Esophagus muscularis mucosa (tissue), 4 donors: ENCODE measurements at regions of chr14 and their contacts with region 1.

Region 1: DNA sequence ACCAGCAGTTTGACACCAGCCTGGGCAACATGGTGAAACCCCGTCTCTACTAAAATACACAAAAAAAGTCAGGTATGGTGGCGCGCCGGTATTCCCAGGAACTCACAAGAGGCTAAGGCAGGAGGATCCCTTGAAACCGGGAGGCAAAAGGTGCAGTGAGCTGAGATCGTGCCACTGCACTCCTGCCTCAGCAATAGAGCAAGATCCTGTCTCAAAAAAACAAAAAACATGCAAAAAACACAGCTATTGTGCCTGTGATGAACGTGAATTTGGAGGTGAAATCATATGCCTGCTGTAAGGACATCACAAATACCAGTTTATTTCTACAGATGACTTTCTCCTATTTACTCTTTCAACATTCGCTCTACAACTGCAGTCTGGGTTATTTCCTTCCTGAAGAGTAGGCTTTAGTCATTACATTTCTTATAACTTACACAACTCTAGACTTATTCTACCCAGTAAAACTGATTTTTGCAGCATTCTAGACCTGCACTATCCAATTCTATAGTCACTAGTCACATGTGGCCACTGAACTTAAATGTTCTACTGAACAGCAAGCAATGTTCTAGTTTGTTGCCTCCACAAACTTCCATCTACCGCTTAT is 48.3 kb downstream of the HNRNPC start:
- DNase-seq: no peak
- H3K4me3 ChIP-seq: no peak overlapping the region
- H3K27ac ChIP-seq: no peak overlapping the region
- H3K4me1 ChIP-seq: peaks cover 25 to 80% (median 64%) of the 10 kb centered on the region in 4 donors
- H3K27me3 ChIP-seq: no peaks in the 10 kb centered on the region
- CTCF ChIP-seq: no peak
- EP300 ChIP-seq: no peak
- POLR2A ChIP-seq: no peak

Region 2: DNA sequence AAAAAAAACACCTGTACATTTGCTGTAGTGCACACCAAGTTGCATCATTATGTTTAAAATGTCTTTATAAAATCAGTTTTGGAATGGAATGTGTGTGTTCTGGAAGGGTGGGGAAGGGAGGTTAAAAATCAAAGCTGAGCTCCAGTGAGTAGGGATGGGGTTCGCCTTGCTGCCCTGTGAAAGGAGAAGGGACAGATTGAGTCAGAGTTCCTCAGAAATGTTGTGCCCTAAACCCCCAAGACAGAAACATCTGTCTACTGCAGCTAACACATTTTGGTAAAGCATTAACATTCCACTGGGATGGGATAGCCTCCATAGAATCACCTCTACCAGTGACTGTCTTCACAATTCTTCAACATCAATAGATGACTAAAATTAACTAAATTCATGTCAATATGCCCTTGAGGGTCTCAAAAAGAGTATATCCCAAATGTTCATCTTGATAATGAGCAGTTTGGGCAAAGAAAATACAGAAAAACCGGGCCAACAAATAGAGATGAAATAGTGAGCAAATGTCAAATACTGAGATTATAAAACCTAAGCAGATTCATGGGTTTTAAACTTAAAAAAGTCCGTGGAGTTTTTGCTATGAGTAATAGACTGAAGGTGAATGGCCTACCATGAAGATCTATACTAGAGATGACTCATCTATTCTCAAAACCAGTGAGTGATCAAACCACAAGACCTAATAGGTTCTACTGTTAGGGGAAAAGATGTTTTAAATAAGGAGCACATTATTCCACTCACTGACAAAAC is 42.9 kb after region 1 on chr14:
- intact Hi-C with region 1: loop called (anchors 5 kb)
- DNase-seq: no peak
- H3K4me3 ChIP-seq: peak overlapping the region in 1 of 4 donors; percentile 1
- H3K27ac ChIP-seq: peak overlapping the region in 3 of 4 donors; percentile 17 to 58 (median 34)
- H3K4me1 ChIP-seq: peaks cover 77 to 94% (median 88%) of the 10 kb centered on the region in 4 donors
- H3K27me3 ChIP-seq: no peaks in the 10 kb centered on the region
- CTCF ChIP-seq: no peak
- EP300 ChIP-seq: no peak
- POLR2A ChIP-seq: no peak